AG04450 (cell line): ENCODE measurements at regions of chr14 and their contacts with region 1.

Region 1: GRCh38 chr14:100246826-100247428 is 8.0 kb downstream of the YY1 start:
- DNase-seq: no peak
- H3K4me3 ChIP-seq: no peak overlapping the region
- H3K27ac ChIP-seq: no peak overlapping the region
- H3K27me3 ChIP-seq: no peaks in the 10 kb centered on the region
- CTCF ChIP-seq: peak; percentile 83

Region 2: GRCh38 chr14:99808515-99808914 is 438.4 kb before region 1 on chr14:
- CTCF ChIA-PET with region 1: no interaction called
- POLR2A ChIA-PET with region 1: interaction called, 12 read pairs
- DNase-seq: no peak
- H3K4me3 ChIP-seq: no peak overlapping the region
- H3K27ac ChIP-seq: no peak overlapping the region
- H3K27me3 ChIP-seq: no peaks in the 10 kb centered on the region
- CTCF ChIP-seq: 0 out of 2 replicates have a peak, but pooled peaks have one; percentile 6

Region 3: DNA sequence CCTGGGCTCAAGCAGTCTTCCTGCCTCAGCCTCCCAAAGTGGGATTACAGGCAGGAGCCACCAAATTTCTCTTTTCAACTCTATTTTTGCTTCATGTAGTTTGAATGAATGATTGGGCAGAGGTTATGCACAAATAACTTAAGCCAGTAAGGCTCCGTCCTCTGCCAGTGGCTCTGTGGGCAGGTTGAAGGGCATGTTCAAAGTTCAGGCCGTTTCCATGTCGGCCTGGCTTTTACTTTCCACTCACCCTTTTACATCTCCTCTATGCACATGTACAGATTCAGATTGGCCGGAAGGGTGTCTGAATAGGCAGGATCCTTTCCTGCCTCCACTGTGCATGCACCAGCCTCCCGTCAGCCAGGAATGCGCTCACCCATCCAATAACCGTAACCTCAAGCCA is 321.5 kb before region 1 on chr14:
- CTCF ChIA-PET with region 1: no interaction called
- POLR2A ChIA-PET with region 1: no interaction called
- DNase-seq: no peak
- H3K4me3 ChIP-seq: no peak overlapping the region
- H3K27ac ChIP-seq: no peak overlapping the region
- H3K27me3 ChIP-seq: no peaks in the 10 kb centered on the region
- CTCF ChIP-seq: no peak

Region 4: GRCh38 chr14:100263144-100263543 is 16.2 kb after region 1 on chr14:
- CTCF ChIA-PET with region 1: interaction called, 23 read pairs
- POLR2A ChIA-PET with region 1: no interaction called
- DNase-seq: no peak
- H3K4me3 ChIP-seq: no peak overlapping the region
- H3K27ac ChIP-seq: no peak overlapping the region
- H3K27me3 ChIP-seq: no peaks in the 10 kb centered on the region
- CTCF ChIP-seq: no peak

Region 5: DNA sequence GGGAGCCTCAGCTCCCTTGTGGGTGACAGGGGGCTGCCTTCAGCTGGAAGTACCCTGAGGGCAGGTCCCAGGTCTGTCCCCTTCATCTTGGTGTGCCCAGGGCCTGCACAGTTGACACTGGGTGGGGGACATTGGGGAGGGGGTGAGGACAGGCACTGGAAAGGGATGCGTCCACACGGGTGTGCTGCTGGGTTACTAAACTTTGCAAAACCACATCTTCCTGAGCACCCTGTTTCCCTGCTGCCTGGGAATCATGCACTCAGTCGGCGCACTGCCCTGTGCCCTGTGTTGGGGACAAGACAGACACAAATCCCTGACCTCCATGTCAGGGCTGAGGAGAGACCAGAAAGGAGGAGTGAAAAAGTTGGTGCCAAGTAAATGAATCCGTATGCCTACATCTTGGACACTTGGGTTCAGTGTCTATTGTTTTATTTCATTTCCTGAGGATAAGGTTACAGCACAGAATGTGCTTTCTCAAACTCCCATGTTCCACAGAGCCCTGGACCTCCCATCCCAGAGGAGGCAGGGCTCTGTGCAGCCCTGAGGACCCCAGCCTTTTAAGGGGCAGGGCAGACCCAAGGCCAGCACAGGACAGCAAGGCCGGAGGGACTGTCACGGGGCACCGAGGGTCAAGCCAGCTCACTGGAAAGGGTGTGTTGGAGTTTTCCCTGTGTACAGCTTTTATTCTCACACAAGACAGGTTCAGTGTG is 62.3 kb after region 1 on chr14:
- CTCF ChIA-PET with region 1: no interaction called
- POLR2A ChIA-PET with region 1: no interaction called
- DNase-seq: no peak
- H3K4me3 ChIP-seq: no peak overlapping the region
- H3K27ac ChIP-seq: no peak overlapping the region
- H3K27me3 ChIP-seq: no peaks in the 10 kb centered on the region
- CTCF ChIP-seq: no peak